ENCODE measurements at regions of chr10 and their contacts with region 1.

Region 1: DNA sequence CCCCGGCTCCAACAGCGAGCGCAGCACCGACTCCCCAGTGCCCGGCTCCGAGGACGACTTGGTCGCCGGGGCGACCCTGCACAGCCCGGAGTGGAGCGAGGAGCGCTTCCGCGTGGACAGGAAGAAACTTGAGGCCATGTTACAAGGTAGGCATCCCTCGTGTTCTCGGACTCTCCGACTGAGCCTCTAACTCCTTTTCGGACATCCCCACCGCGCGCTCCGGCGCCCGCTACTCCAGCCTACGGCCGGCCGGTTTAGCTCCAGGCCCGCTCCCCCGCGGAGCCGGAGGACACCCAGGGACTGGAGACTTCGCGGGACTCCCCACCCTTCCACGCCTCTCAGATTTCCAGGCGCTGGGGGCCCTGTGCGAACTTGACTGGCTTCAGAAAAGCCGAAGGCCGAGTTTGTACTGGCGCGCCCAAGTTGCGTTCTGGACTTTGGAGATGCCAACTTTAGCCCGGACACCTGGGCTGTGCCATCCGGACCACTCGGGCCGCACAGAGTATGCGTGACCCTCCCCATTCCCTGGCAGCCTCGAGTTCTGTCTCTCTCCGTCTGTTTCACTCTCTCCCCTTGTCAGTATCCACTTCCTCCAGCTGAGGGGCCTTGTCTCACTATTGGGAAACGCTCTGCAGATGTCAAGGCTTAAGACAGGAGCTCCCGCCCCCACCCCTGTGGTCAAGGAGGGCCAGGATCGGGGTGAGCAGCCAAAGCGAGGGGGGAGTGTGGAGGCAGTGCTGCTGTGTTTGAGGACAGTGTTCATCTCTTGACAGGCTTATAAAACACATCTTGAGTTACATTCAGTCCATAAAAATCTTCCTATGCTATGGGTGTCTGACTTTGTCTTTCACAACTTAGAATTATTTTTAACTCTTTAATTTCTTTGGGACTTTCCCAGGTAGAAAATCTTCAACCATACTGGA is 777 bp downstream of the BICC1 start:
- DNase-seq: peak; percentile 41
- ATAC-seq: peak; percentile 51
- H3K4me3 Mint-ChIP-seq: peak overlapping the region; percentile 76
- H3K27ac Mint-ChIP-seq: no peak overlapping the region
- H3K4me1 Mint-ChIP-seq: peaks cover 11% of the 10 kb centered on the region
- H3K27me3 Mint-ChIP-seq: peaks cover 23% of the 10 kb centered on the region
- CTCF ChIP-seq: no peak

Region 2: DNA sequence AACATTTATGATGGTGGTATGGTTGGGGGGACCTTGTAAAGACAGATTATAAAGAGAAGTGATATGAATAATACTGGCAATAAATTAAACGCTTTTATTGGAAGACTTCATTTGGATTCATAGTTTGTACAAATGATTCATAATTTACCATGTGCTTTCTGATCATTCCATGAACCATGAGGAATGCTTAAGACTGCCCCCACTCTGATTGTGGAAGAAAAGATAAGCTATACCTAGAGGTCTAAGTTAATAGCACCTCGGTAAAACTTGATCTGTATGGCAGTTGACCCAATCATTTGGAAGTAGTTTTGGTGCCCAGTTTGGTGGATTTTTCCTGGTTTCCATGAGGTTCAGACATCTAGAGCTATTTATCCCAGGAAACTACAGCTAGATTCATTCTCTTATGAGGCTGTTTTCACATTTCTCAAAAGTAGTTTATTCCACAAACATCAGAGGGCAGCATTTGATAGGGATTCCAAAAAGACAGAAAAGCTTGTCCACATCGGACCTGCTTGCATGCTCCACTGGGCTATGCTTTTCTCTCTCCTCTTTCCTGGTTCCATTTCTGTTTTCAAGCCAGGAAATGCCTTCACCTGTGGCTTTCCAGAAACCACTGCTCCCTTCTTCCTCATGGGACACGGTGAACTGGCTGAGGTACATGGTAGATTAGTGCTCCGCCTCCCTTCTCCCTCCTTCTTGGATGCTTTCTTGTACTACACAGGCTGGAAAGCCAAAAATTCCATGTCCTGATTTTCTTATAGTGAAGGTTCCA is 99.0 kb before region 1 on chr10:
- CTCF ChIA-PET with region 1: interaction called, 10 read pairs
- POLR2A ChIA-PET with region 1: no interaction called
- DNase-seq: no peak
- ATAC-seq: peak; percentile 47
- H3K4me3 Mint-ChIP-seq: no peak overlapping the region
- H3K27ac Mint-ChIP-seq: no peak overlapping the region
- H3K4me1 Mint-ChIP-seq: peaks cover 21% of the 10 kb centered on the region
- H3K27me3 Mint-ChIP-seq: no peaks in the 10 kb centered on the region
- CTCF ChIP-seq: no peak

Region 3: GRCh38 chr10:58477122-58477521 is 36.3 kb before region 1 on chr10:
- CTCF ChIA-PET with region 1: no interaction called
- POLR2A ChIA-PET with region 1: interaction called, 10 read pairs
- DNase-seq: peak; percentile 46
- ATAC-seq: peak; percentile 96
- H3K4me3 Mint-ChIP-seq: no peak overlapping the region
- H3K27ac Mint-ChIP-seq: peak overlapping the region; percentile 96
- H3K4me1 Mint-ChIP-seq: peaks cover 23% of the 10 kb centered on the region
- H3K27me3 Mint-ChIP-seq: no peaks in the 10 kb centered on the region; the same call in 1 of the 2 replicates
- CTCF ChIP-seq: no peak

Measured in WTC11 (cell line).